ENCODE measurements at regions of chr7 and their contacts with region 1.

Region 1: GRCh38 chr7:27160546-27161213 is 4.2 kb upstream of the HOXA7 start:
- DNase-seq: no peak
- H3K4me3 ChIP-seq: peak overlapping the region; percentile 72
- H3K27me3 ChIP-seq: no peaks in the 10 kb centered on the region
- CTCF ChIP-seq: peak; percentile 98

Region 2: GRCh38 chr7:26667500-26668133 is 493.1 kb before region 1 on chr7:
- CTCF ChIA-PET with region 1: interaction called, 13 read pairs
- POLR2A ChIA-PET with region 1: no interaction called
- DNase-seq: peak; percentile 66
- H3K4me3 ChIP-seq: no peak overlapping the region
- H3K27me3 ChIP-seq: no peaks in the 10 kb centered on the region
- CTCF ChIP-seq: peak; percentile 86

Region 3: GRCh38 chr7:27172823-27173510 is 12.3 kb after region 1 on chr7:
- CTCF ChIA-PET with region 1: interaction called, 24 read pairs
- POLR2A ChIA-PET with region 1: interaction called, 5 read pairs
- DNase-seq: peak; percentile 79
- H3K4me3 ChIP-seq: peak overlapping the region; percentile 72
- H3K27me3 ChIP-seq: no peaks in the 10 kb centered on the region
- CTCF ChIP-seq: no peak

Region 4: DNA sequence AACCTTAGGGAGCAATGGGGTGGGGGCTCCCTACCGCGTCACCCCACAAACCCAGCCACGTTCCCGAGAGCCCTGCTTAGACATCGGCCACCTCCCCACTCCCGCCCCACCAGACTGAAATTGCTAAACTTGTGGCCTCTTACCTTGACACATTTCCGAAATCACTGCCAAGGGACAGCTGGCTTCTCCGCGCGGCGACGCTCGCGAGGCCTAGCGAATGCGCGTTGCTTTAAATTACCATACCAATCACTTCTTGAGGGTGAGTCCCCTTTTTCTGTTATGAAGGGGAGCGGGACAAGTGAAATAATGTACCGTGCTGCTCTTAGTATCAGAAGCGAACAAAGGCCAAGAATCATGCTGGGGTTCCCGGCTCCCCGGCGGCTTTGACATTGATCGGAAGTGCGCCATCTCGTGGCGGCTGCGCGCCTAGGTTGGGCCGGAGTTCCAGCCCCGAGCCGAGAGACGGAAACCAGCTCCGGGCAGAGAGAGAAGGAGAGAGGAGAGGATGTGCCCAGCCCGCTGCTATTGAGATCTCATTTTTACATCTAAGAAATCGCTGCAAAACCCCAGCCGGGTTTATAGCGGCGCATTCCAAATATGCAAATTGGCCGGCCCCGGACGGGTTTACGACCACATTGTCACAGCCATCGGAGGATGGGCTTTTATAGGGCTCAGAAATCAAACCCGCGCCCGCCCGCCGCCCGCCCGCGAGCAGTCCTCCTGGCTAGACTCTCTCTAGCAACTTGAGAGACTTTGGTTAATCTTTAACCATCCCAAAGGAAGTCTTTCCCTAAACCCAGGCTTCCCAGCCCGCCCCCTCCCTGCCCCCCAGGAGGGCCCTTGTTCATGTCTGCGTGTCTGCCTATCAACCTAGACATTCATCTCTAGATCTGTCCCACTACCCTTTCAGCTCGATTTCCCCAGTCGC is 19.1 kb after region 1 on chr7:
- CTCF ChIA-PET with region 1: interaction called, 187 read pairs
- POLR2A ChIA-PET with region 1: interaction called, 7 read pairs
- DNase-seq: peak; percentile 68
- H3K4me3 ChIP-seq: peak overlapping the region; percentile 72
- H3K27me3 ChIP-seq: no peaks in the 10 kb centered on the region
- CTCF ChIP-seq: peak; percentile 97

Region 5: DNA sequence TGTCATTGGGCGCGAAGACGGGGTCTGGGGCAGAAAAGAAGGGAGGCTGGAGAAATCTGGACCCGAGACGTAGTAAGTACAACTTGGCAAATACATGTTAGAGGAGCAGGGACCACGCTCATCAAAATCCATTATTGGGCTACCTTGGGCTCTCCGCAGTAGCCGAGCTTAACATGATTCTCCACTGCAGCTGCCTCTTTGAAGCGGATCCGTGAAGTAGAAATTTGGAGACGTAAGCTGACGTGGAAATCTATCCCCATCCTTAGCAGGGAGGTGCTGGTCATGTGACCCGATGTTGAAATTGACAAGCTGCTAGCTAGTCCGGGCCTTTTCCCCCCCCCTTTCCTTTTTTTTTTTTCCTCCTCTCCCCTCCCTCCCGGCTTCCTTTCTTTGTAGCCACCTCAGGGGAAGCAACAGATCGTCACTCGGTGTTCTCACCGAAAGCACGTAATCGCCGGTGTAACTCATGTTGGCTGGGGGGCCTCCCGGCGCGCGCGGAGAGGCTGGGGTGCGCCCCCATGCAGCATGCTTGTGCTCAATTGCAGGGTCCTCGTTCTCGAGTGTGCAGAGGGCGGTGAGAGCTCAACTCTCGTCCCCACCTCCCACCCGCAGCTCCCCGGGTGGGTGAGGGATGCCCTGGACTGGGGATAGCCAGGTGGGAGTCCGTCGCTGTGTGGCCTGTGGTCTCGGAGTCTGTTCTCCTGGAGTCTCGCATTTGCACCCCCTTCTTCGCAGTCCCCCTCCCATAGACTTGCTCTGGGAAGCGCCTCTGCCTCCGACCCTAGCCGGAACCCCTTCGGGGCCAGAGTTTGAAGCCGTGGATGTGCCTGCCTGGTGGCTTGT is 24.6 kb after region 1 on chr7 and contains the start of gene HOXA11:
- CTCF ChIA-PET with region 1: interaction called, 187 read pairs
- POLR2A ChIA-PET with region 1: interaction called, 7 read pairs
- DNase-seq: peak; percentile 94
- H3K4me3 ChIP-seq: peak within 1 kb of the TSS; percentile 88
- H3K27me3 ChIP-seq: no peaks in the 10 kb centered on the region
- CTCF ChIP-seq: no peak
- polyA plus RNA-seq, gene HOXA11: 27.7 and 34.0 TPM in 2 replicates

Region 6: GRCh38 chr7:27248911-27249723 is 88.4 kb after region 1 on chr7:
- CTCF ChIA-PET with region 1: no interaction called
- POLR2A ChIA-PET with region 1: no interaction called
- DNase-seq: no peak
- H3K4me3 ChIP-seq: no peak overlapping the region
- H3K27me3 ChIP-seq: peaks cover 59% of the 10 kb centered on the region
- CTCF ChIP-seq: no peak

Measured in BJ (cell line).